ENCODE measurements at regions of chr11 and their contacts with region 1.

Region 1: GRCh38 chr11:15016200-15016599 is 44.0 kb upstream of the CALCA start:
- DNase-seq: no peak
- H3K4me3 ChIP-seq: no peak overlapping the region
- H3K27ac ChIP-seq: no peak overlapping the region
- H3K4me1 ChIP-seq: no peaks in the 10 kb centered on the region
- H3K27me3 ChIP-seq: no peaks in the 10 kb centered on the region
- CTCF ChIP-seq: no peak

Region 2: GRCh38 chr11:14029971-14030920 is 986.0 kb before region 1 on chr11:
- CTCF ChIA-PET with region 1: no interaction called
- POLR2A ChIA-PET with region 1: no interaction called
- intact Hi-C with region 1: no loop called
- DNase-seq: no peak
- H3K4me3 ChIP-seq: no peak overlapping the region
- H3K27ac ChIP-seq: no peak overlapping the region
- H3K4me1 ChIP-seq: no peaks in the 10 kb centered on the region
- H3K27me3 ChIP-seq: peaks cover 13% of the 10 kb centered on the region
- CTCF ChIP-seq: no peak

Region 3: GRCh38 chr11:14927146-14927545 is 89.1 kb before region 1 on chr11:
- CTCF ChIA-PET with region 1: no interaction called
- POLR2A ChIA-PET with region 1: no interaction called
- intact Hi-C with region 1: no loop called
- DNase-seq: no peak
- H3K4me3 ChIP-seq: no peak overlapping the region
- H3K27ac ChIP-seq: no peak overlapping the region
- H3K4me1 ChIP-seq: peaks cover 9% of the 10 kb centered on the region
- H3K27me3 ChIP-seq: no peaks in the 10 kb centered on the region
- CTCF ChIP-seq: no peak

Region 4: GRCh38 chr11:15035283-15035682 is 19.1 kb after region 1 on chr11:
- CTCF ChIA-PET with region 1: interaction called, 10 read pairs
- POLR2A ChIA-PET with region 1: no interaction called
- intact Hi-C with region 1: no loop called
- DNase-seq: peak; percentile 23
- H3K4me3 ChIP-seq: peak overlapping the region; percentile 21
- H3K27ac ChIP-seq: no peak overlapping the region
- H3K4me1 ChIP-seq: no peaks in the 10 kb centered on the region
- H3K27me3 ChIP-seq: no peaks in the 10 kb centered on the region
- CTCF ChIP-seq: no peak

Measured in A673 (cell line).